Gastrocnemius medialis (tissue), 4 donors: ENCODE measurements at regions of chr18 and their contacts with region 1.

Region 1: DNA sequence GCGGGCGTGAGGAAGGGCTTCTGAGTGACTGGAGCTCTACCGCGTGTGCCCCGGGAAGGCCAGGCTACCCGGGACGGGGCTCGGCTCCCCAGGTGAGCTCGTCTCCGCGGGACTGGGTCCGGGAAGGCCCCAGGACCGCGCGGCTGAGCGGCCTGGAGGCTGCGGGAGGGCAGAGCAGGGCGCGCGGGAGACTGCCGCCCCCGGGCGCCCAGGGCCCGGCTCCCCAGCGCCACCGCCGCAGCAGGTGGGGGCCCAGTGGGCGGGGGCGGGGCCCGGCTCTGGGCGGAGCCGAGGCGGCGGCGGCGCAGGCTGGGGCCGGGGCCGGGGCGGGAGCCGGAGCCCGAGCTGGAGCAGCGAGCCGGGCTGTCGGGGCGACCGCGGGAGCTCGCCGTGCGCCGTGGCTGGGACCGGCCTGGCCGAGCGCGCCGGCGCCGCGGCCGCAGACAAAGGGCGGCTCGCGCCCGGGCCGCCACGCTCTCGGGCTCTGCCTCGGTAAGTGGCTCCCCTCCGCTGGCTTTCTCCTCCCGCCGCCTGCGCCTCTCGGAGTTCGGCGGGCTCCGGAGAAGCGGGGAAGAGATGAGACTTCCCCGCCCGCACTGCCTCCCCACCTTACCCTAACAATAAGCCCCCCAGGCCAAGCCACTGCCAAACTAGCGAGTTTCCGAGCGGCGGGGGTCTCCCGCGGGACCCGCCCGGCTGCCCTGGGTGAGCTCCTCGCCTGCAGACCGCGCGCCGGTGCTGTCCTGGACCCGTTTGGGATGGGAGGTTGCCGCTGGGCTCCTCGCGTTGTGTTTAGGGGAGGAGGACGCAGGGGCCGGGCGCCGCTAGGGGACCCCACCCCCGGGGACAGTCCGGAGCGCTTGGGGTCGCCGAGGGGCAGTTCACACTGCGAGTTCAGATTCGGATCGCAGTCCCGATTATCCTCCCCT is at the start of gene MAPK4:
- DNase-seq: peak; percentile 3 to 21
- ATAC-seq: peak; percentile 87 to 88
- H3K4me3 ChIP-seq: peak within 1 kb of the TSS; percentile 68 to 87 (median 78)
- H3K27ac ChIP-seq: peak within 1 kb of the TSS; percentile 59 to 78 (median 68)
- H3K4me1 ChIP-seq: peaks cover 0 to 10% of the 10 kb centered on the region in 2 donors
- H3K27me3 ChIP-seq: peaks cover 0 to 8% (median 4%) of the 10 kb centered on the region in 3 donors
- CTCF ChIP-seq: no peak
- POLR2A ChIP-seq: peak; percentile 37 to 41
- total RNA-seq, gene MAPK4: 0.68 to 2.4 (median 1.7) TPM

Region 2: GRCh38 chr18:50614838-50615237 is 54.8 kb after region 1 on chr18:
- in situ Hi-C with region 1: no loop called
- intact Hi-C with region 1: loop called (anchors 5 kb)
- DNase-seq: peak; percentile 75 to 80
- ATAC-seq: peak; percentile 97 to 98
- H3K4me3 ChIP-seq: no peak overlapping the region
- H3K27ac ChIP-seq: peak overlapping the region; percentile 52 to 79 (median 72)
- H3K4me1 ChIP-seq: peaks cover 0 to 10% of the 10 kb centered on the region in 2 donors
- H3K27me3 ChIP-seq: no peaks in the 10 kb centered on the region
- CTCF ChIP-seq: no peak
- POLR2A ChIP-seq: no peak

Region 3: GRCh38 chr18:50662177-50662576 is 102.2 kb after region 1 on chr18:
- in situ Hi-C with region 1: no loop called
- intact Hi-C with region 1: loop called (anchors 2 kb)
- DNase-seq: no peak
- ATAC-seq: no peak
- H3K4me3 ChIP-seq: no peak overlapping the region
- H3K27ac ChIP-seq: no peak overlapping the region
- H3K4me1 ChIP-seq: peaks cover 33 to 50% of the 10 kb centered on the region in 2 donors
- H3K27me3 ChIP-seq: no peaks in the 10 kb centered on the region
- CTCF ChIP-seq: peak in 1 of 5 experiments; percentile 36
- POLR2A ChIP-seq: no peak

Region 4: DNA sequence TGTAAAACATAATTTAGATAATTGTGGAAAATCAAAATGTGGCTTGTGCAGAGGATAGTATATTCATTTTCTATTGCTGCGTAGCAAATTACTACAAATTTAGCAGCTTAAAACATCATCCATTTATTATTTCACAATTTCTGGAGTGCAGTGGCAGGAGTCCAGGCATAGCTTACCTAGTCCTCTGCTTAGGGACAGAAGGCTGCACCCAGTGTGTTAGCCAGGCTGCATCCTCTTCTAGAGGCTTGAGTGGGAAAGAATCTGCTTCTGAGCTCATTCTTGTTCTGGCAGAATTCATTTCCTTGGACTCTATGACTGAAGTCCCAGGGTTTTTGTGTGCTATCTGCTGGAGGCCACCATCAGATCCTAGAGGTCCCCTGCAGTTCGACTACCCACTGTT is 220.1 kb after region 1 on chr18:
- in situ Hi-C with region 1: no loop called
- intact Hi-C with region 1: loop called (anchors 5 kb)
- DNase-seq: no peak
- ATAC-seq: no peak
- H3K4me3 ChIP-seq: no peak overlapping the region
- H3K27ac ChIP-seq: no peak overlapping the region
- H3K4me1 ChIP-seq: no peaks in the 10 kb centered on the region
- H3K27me3 ChIP-seq: no peaks in the 10 kb centered on the region
- CTCF ChIP-seq: no peak
- POLR2A ChIP-seq: no peak

Region 5: GRCh38 chr18:51051105-51051712 is 491.2 kb after region 1 on chr18:
- in situ Hi-C with region 1: no loop called
- intact Hi-C with region 1: no loop called
- DNase-seq: no peak
- ATAC-seq: peak; percentile 81 to 88
- H3K4me3 ChIP-seq: no peak overlapping the region
- H3K27ac ChIP-seq: no peak overlapping the region
- H3K4me1 ChIP-seq: peaks cover 0 to 11% of the 10 kb centered on the region in 2 donors
- H3K27me3 ChIP-seq: no peaks in the 10 kb centered on the region
- CTCF ChIP-seq: peak; percentile 62 to 81 (median 70)
- POLR2A ChIP-seq: no peak